ENCODE measurements at regions of chr4 and their contacts with region 1.

Region 1: GRCh38 chr4:16001484-16001858 is 38.5 kb upstream of the FGFBP2 start:
- DNase-seq: no peak
- H3K4me3 ChIP-seq: no peak overlapping the region
- H3K27me3 ChIP-seq: peaks cover 1% of the 10 kb centered on the region
- CTCF ChIP-seq: peak; percentile 87

Region 2: DNA sequence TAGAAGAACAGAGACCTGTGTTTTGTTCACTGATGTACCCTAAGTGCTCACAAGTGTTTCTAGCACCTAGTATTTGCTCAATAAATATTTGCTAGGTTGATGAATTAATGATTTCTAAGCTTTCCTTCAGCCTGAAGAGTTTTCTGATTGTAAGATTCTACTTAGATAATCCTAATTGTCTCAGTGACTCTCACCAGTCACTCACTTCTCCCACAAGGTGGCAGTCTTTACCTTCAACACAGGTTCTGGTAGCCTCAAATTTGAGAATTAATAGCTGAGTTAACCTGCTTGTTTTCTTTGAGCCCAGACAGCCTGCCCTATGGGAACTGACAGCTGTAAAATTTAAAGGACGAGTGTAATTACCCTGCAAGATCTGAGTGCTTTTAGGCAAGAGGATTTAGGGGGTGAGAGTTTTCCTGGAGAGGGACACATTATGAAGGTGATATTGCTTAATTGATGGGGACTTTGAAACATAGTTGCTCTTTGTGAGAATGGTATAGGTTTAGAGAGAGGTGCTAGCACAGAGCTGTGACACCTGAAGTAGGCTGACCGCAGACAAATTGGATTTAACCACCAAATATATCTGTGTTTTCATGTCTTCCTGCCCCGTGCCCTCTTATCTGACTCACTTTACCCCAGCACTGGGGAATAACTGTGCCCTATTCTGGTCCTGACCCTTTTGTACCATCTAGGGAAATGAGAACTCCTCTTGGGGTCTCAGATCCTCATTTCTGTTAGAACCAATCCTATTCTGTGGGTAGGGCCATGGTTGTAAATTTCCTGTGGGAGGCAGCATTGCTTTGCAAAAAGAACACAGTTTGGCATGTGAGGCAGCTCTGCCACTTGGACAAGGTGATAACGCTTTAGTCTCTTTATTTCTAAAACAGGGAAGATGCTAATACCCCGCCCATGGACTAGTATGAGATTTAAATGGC is 195.6 kb before region 1 on chr4:
- CTCF ChIA-PET with region 1: interaction called, 32 read pairs
- POLR2A ChIA-PET with region 1: no interaction called
- DNase-seq: no peak
- H3K4me3 ChIP-seq: no peak overlapping the region
- H3K27me3 ChIP-seq: peaks cover 3% of the 10 kb centered on the region; the same call in 1 of the 2 replicates
- CTCF ChIP-seq: peak; percentile 71

Region 3: GRCh38 chr4:15963001-15963451 is 38.4 kb before region 1 on chr4 and contains the start of gene FGFBP2:
- CTCF ChIA-PET with region 1: interaction called, 32 read pairs
- POLR2A ChIA-PET with region 1: no interaction called
- DNase-seq: no peak
- H3K4me3 ChIP-seq: no peak within 1 kb of the TSS
- H3K27me3 ChIP-seq: peaks cover 6% of the 10 kb centered on the region
- CTCF ChIP-seq: peak; percentile 58
- polyA plus RNA-seq, gene FGFBP2: not detected in 2 replicates

Region 4: GRCh38 chr4:15986907-15987306 is 14.6 kb before region 1 on chr4:
- CTCF ChIA-PET with region 1: interaction called, 14 read pairs
- POLR2A ChIA-PET with region 1: no interaction called
- DNase-seq: no peak
- H3K4me3 ChIP-seq: no peak overlapping the region
- H3K27me3 ChIP-seq: peaks cover 7% of the 10 kb centered on the region; the same call in 1 of the 2 replicates
- CTCF ChIP-seq: no peak

Region 5: GRCh38 chr4:16196478-16197393 is 195.3 kb after region 1 on chr4:
- CTCF ChIA-PET with region 1: no interaction called
- POLR2A ChIA-PET with region 1: no interaction called
- DNase-seq: no peak
- H3K4me3 ChIP-seq: no peak overlapping the region
- H3K27me3 ChIP-seq: no peaks in the 10 kb centered on the region
- CTCF ChIP-seq: peak; percentile 29

Measured in BJ (cell line).